T-cell (primary cell): ENCODE measurements at regions of chr21 and their contacts with region 1.

Region 1: DNA sequence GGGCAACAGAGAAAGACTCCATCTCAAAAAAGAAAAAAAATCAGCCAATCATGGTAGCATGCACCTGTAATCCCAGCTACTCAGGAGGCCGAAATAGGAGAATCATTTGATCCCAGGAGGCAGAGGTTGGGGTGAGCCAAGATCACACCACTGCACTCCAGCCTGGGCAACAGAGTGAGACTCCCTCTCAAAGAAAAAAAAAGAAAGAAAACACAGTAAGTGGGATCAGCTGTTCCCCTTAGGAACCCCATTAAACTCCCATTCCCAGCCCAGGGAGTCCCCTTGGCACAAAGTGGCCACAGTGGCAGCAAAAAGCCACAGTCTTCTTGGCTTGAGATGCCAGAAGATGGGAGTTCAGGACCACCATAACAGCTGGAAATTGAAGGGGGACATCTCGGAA is 9.1 kb downstream of the TMEM50B start:
- DNase-seq: no peak
- ATAC-seq: no peak
- H3K4me3 ChIP-seq: no peak overlapping the region
- H3K4me3 Mint-ChIP-seq: no peak overlapping the region
- H3K27ac ChIP-seq: no peak overlapping the region
- H3K27ac Mint-ChIP-seq: no peak overlapping the region
- H3K4me1 ChIP-seq: no peaks in the 10 kb centered on the region
- H3K4me1 Mint-ChIP-seq: peaks cover 15 to 23% (median 23%) of the 10 kb centered on the region in 3 donors
- H3K27me3 ChIP-seq: no peaks in the 10 kb centered on the region
- H3K27me3 Mint-ChIP-seq: no peaks in the 10 kb centered on the region

Region 2: DNA sequence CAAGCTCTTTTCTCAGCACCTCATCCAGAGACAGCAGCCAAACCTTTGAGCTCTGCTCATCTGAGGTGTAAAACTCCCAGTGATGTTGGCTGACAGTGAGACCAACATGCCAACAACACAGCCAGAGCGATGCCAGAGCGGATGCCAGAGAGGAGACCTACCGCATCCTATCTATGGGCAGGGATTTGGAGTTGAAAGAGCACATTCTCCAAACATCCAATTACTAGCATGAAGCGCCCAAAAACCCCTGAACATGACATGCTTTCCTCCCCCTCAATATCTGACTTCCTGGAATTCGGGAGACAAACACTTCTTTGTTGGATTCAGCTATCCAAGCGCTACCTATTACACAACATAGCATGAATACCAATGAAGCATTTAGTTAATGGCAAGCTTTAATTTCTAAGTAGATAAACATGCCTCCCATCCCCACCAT is 676.0 kb before region 1 on chr21:
- CTCF ChIA-PET with region 1: no interaction called
- POLR2A ChIA-PET with region 1: interaction called in 1 of 2 experiments, 10 read pairs
- DNase-seq: no peak
- ATAC-seq: no peak
- H3K4me3 ChIP-seq: no peak overlapping the region
- H3K4me3 Mint-ChIP-seq: no peak overlapping the region
- H3K27ac ChIP-seq: no peak overlapping the region
- H3K27ac Mint-ChIP-seq: no peak overlapping the region
- H3K4me1 ChIP-seq: no peaks in the 10 kb centered on the region
- H3K4me1 Mint-ChIP-seq: peaks cover 0 to 2% (median 2%) of the 10 kb centered on the region in 3 donors
- H3K27me3 ChIP-seq: no peaks in the 10 kb centered on the region
- H3K27me3 Mint-ChIP-seq: no peaks in the 10 kb centered on the region

Region 3: GRCh38 chr21:33434770-33435360 is 35.8 kb before region 1 on chr21:
- CTCF ChIA-PET with region 1: no interaction called
- POLR2A ChIA-PET with region 1: no interaction called
- DNase-seq: no peak
- ATAC-seq: peak in 3 of 4 experiments; percentile 84 to 94 (median 89)
- H3K4me3 ChIP-seq: no peak overlapping the region
- H3K4me3 Mint-ChIP-seq: peak overlapping the region in 1 of 3 donors; percentile 49
- H3K27ac ChIP-seq: peak overlapping the region; percentile 6
- H3K27ac Mint-ChIP-seq: peak overlapping the region; percentile 82 to 94
- H3K4me1 ChIP-seq: no peaks in the 10 kb centered on the region
- H3K4me1 Mint-ChIP-seq: peaks cover 9 to 22% (median 14%) of the 10 kb centered on the region in 3 donors
- H3K27me3 ChIP-seq: no peaks in the 10 kb centered on the region
- H3K27me3 Mint-ChIP-seq: no peaks in the 10 kb centered on the region